ENCODE measurements at regions of chr1 and their contacts with region 1.

Region 1: DNA sequence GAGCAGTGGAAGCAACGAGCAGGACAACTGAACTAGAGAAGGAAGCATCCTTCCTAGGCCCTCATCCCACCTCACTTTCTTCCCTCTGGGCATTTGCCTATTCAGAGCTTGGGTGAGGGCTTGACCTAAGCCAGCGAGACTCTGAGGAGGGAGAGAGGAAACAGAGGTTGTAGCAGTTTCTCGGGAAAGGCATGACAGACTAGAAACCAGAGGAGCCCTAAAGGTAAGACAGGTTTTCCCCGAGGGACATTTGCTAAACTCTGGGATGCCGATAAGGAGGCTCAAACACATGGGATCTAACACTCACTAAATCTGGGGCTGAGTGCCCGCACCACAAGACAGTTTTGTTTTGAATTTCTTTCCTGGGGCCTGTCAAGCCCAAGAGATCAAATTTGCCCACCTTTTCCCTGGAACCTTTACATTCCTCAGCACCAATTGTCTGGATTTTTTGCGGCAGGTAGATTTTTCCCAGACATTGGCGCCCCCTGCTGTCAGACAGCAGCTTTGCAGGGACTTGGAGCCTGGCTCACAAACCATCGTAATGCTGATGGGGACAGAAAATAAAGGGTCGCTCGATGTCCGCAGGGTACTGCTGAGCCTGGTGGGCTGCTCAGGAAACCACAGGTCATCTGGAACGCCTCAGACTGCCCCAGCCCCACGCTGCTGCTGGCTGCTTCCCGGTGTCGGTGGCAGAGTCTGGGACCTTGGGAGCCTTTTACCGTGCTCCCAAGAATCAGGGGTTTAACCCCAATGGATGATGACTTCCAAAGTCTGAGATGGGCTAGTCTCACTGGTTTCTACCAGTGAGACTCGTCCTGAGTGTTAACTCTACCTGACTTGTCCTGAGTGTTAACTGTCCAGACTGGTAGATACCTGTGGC is 23.4 kb upstream of the TSPAN2 start:
- DNase-seq: peak; percentile 53
- ATAC-seq: peak; percentile 33
- H3K4me3 Mint-ChIP-seq: no peak overlapping the region
- H3K27ac Mint-ChIP-seq: no peak overlapping the region
- H3K4me1 Mint-ChIP-seq: peaks cover 2% of the 10 kb centered on the region
- H3K27me3 Mint-ChIP-seq: peaks cover 1% of the 10 kb centered on the region

Region 2: GRCh38 chr1:114979278-114979891 is 133.4 kb before region 1 on chr1:
- CTCF ChIA-PET with region 1: interaction called, 41 read pairs
- POLR2A ChIA-PET with region 1: no interaction called
- DNase-seq: peak; percentile 73
- ATAC-seq: no peak
- H3K4me3 Mint-ChIP-seq: no peak overlapping the region
- H3K27ac Mint-ChIP-seq: no peak overlapping the region
- H3K4me1 Mint-ChIP-seq: no peaks in the 10 kb centered on the region
- H3K27me3 Mint-ChIP-seq: peaks cover 4% of the 10 kb centered on the region

Region 3: GRCh38 chr1:114986286-114986685 is 126.5 kb before region 1 on chr1:
- CTCF ChIA-PET with region 1: interaction called, 41 read pairs
- POLR2A ChIA-PET with region 1: no interaction called
- DNase-seq: no peak
- ATAC-seq: no peak
- H3K4me3 Mint-ChIP-seq: no peak overlapping the region
- H3K27ac Mint-ChIP-seq: no peak overlapping the region
- H3K4me1 Mint-ChIP-seq: no peaks in the 10 kb centered on the region
- H3K27me3 Mint-ChIP-seq: peaks cover 3% of the 10 kb centered on the region

Region 4: DNA sequence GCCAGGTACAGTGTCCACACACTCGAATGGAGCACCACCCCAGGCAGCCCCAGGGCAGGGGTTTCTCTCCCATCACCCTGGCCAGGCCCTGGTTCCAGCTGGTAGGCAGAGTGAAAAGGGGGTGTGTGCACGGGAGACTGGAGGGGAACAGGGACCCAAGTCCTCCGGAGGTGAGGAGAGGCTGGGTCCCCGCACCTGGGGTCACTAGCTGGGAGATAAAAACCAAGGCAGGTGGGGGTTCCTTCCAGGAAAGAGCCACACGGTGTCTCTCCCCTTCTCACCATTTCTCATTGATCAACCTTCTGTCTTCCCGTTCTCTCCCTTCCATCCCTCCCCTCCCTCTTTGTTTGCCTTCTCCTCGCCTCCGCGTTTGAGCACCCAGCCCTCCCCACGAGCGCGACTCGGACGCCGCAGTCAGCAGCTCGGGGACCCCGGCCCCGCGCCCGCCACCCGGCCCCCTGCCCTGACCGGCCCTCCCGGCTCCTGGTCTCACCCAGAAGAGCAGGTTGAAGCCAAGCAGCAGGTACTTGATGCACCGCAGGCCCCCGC is 23.8 kb before region 1 on chr1:
- CTCF ChIA-PET with region 1: interaction called, 17 read pairs
- POLR2A ChIA-PET with region 1: no interaction called
- DNase-seq: no peak
- ATAC-seq: no peak
- H3K4me3 Mint-ChIP-seq: peak overlapping the region; percentile 61
- H3K27ac Mint-ChIP-seq: no peak overlapping the region
- H3K4me1 Mint-ChIP-seq: peaks cover 16% of the 10 kb centered on the region
- H3K27me3 Mint-ChIP-seq: peaks cover 15% of the 10 kb centered on the region

Region 5: GRCh38 chr1:115098979-115099692 is 13.6 kb before region 1 on chr1:
- CTCF ChIA-PET with region 1: interaction called, 39 read pairs
- POLR2A ChIA-PET with region 1: no interaction called
- DNase-seq: peak; percentile 84
- ATAC-seq: peak; percentile 89
- H3K4me3 Mint-ChIP-seq: peak overlapping the region; percentile 82
- H3K27ac Mint-ChIP-seq: peak overlapping the region; percentile 97
- H3K4me1 Mint-ChIP-seq: peaks cover 27% of the 10 kb centered on the region
- H3K27me3 Mint-ChIP-seq: peaks cover 4% of the 10 kb centered on the region

Measured in activated CD8-positive, alpha-beta T cell treated with anti-CD3 and anti-CD28 coated beads, Interleukin-2, amount 10 ng/mL, durations not matched to agents 7 days and 5 days (primary cell).